Activated CD4-positive, alpha-beta T cell treated with anti-CD3 and anti-CD28 coated beads, Interleukin-2, amount 10 ng/mL, durations not matched to agents 24 days and 14 days (primary cell): ENCODE measurements at regions of chr1 and their contacts with region 1.

Region 1: GRCh38 chr1:160451119-160451858 is 50.9 kb downstream of the VANGL2 start:
- DNase-seq: peak; percentile 60
- H3K4me3 Mint-ChIP-seq: peak overlapping the region; percentile 42
- H3K27ac Mint-ChIP-seq: peak overlapping the region; percentile 87
- H3K4me1 Mint-ChIP-seq: peaks cover 65% of the 10 kb centered on the region
- H3K27me3 Mint-ChIP-seq: no peaks in the 10 kb centered on the region

Region 2: DNA sequence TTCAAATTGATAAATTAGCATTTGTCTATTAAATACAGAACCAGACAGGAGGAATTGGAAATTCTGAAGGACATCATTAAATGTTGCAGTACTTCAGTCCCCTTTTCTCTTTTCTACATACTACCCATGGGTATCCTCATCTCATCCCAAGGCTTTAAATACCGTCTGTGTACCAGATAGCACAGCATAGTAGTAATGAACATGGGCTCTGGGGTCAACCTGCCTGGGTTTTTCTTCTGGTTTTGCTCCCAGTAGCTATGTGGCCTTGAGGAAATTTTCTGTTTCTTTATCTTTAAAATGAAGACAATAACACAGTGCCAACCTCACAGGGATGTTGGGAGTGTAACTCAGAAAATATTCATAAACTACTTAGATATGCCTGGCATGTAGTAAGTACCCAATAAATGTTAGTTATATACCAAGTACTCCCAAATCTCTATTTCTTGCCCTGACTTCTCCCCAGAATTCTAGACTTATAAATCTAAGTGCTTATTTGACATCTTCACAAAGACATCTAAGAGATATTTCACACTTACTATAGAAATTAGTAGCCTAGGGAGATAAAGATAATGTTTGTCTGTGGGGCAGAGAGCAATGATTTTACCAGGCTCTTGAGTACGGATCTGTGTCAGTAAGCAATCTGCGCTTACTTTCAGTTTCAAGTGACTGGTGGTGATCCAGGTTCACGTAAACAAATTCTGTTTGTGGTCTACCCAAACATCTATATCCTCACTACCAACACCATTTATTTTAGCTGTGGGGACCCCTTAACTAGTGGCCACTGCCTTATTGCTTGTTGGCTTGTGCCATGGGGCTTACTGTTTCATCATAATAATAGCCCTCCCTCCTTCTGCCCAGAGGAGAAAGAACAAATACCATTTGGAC is 13.6 kb before region 1 on chr1:
- intact Hi-C with region 1: loop called (anchors 2 kb)
- DNase-seq: peak; percentile 83
- H3K4me3 Mint-ChIP-seq: peak overlapping the region; percentile 85
- H3K27ac Mint-ChIP-seq: peak overlapping the region; percentile 97
- H3K4me1 Mint-ChIP-seq: peaks cover 38% of the 10 kb centered on the region
- H3K27me3 Mint-ChIP-seq: no peaks in the 10 kb centered on the region

Region 3: GRCh38 chr1:160629286-160630210 is 178.3 kb after region 1 on chr1:
- intact Hi-C with region 1: loop called (anchors 2 kb)
- DNase-seq: peak; percentile 94
- H3K4me3 Mint-ChIP-seq: peak overlapping the region; percentile 74
- H3K27ac Mint-ChIP-seq: peak overlapping the region; percentile 99
- H3K4me1 Mint-ChIP-seq: peaks cover 91% of the 10 kb centered on the region
- H3K27me3 Mint-ChIP-seq: no peaks in the 10 kb centered on the region